ENCODE measurements at regions of chr21 and their contacts with region 1.

Region 1: DNA sequence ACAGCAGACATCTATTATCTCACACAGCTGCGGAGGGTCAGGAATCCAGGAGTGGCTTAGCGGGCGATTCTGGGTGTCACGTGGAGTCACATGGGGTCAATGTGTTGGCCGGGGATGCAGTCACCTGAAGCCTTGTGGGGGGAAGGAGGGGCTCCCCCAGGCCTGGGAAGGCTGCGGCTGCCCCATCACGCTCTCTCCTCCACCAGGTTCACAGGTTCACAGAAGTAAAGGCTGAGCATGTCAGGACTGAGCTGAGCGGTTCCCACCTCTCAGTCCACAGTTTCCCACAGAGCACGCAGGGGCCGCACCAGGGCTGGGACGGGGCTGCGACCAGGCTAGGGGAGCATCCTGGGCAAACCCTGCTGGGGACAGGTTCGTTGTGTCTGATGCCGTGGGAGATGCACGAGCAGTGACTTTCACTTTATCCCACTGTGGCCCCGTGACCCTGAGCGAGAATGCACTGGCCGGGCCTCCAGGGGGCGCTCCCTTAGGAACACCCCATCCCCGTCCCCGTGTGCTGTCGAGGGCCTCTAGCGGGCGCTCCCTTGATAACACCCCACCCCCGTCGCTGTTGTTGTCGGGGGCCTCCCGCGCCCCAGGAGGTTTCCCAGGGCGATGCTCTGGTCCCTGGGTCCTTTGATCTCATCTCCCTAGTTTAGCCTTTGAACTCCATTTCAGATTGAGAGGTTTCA is 73.2 kb upstream of the TRAPPC10 start:
- DNase-seq: peak; percentile 94
- ATAC-seq: peak; percentile 93
- H3K4me3 Mint-ChIP-seq: peak overlapping the region; percentile 39
- H3K27ac Mint-ChIP-seq: peak overlapping the region; percentile 19; the same call in 1 of the 2 replicates
- H3K4me1 Mint-ChIP-seq: peaks cover 3% of the 10 kb centered on the region
- H3K27me3 Mint-ChIP-seq: no peaks in the 10 kb centered on the region
- CTCF ChIP-seq: peak; percentile 92

Region 2: GRCh38 chr21:43810505-43811261 is 128.2 kb before region 1 on chr21:
- CTCF ChIA-PET with region 1: interaction called, 40 read pairs
- POLR2A ChIA-PET with region 1: interaction called, 4 read pairs
- DNase-seq: peak; percentile 98
- ATAC-seq: peak; percentile 77
- H3K4me3 Mint-ChIP-seq: no peak overlapping the region
- H3K27ac Mint-ChIP-seq: no peak overlapping the region
- H3K4me1 Mint-ChIP-seq: peaks cover 22% of the 10 kb centered on the region
- H3K27me3 Mint-ChIP-seq: no peaks in the 10 kb centered on the region
- CTCF ChIP-seq: peak; percentile 97

Region 3: DNA sequence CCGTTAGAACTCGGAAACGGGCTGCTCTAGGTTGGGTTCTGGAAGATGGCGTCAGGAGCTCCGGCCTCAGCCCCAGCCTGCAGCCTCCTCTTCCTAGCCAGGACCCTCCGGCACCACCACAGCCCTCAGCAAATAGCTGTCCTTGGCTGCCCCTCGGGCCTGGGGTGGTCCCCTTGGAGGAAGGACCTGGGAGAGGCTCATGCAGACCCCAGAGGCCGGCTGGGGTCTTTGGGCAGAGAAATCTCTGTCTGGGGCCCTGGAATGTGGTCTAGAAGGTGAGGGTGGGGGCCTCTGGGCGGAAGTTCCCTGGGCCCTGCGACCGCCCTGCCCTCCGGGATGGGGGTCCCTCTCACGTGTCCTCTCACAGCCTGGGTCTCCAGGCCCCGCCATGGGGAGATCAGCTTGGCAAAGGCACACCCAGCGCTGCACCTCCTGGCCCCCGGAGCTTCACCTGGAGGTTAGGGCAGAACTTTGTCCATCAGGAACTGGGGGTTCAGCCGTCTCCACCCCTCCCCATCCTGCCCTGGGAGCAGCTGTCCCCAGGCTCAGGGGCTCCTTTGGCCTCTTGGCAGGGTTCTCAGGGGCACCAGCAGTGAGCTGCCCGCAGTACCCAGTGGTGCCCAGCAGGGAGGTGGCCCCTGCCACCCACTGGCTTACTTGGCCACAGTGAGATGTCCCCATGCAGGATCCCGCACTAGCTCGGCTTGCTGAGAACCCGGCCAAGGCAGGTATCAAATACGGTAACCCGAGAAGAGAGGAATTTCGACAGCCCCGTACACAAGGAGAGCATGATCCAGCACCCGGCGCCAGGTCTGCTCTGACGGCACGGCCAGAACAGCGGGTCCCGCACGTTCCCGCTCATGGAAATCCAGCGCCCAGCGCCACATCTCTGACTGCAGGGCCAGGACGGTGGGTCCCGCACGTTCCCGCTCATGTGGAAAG is 112.9 kb before region 1 on chr21:
- CTCF ChIA-PET with region 1: interaction called, 11 read pairs
- POLR2A ChIA-PET with region 1: no interaction called
- DNase-seq: peak; percentile 54
- ATAC-seq: peak; percentile 73
- H3K4me3 Mint-ChIP-seq: no peak overlapping the region
- H3K27ac Mint-ChIP-seq: peak overlapping the region; percentile 78
- H3K4me1 Mint-ChIP-seq: peaks cover 7% of the 10 kb centered on the region
- H3K27me3 Mint-ChIP-seq: no peaks in the 10 kb centered on the region
- CTCF ChIP-seq: no peak

Region 4: GRCh38 chr21:43880111-43880985 is 58.5 kb before region 1 on chr21:
- CTCF ChIA-PET with region 1: interaction called, 12 read pairs
- POLR2A ChIA-PET with region 1: no interaction called
- DNase-seq: no peak
- ATAC-seq: no peak; the same call in 1 of the 2 replicates
- H3K4me3 Mint-ChIP-seq: no peak overlapping the region
- H3K27ac Mint-ChIP-seq: no peak overlapping the region
- H3K4me1 Mint-ChIP-seq: peaks cover 7% of the 10 kb centered on the region
- H3K27me3 Mint-ChIP-seq: no peaks in the 10 kb centered on the region
- CTCF ChIP-seq: no peak

Region 5: GRCh38 chr21:43956019-43956669 is 17.2 kb after region 1 on chr21:
- CTCF ChIA-PET with region 1: interaction called, 14 read pairs
- POLR2A ChIA-PET with region 1: no interaction called
- DNase-seq: no peak
- ATAC-seq: no peak
- H3K4me3 Mint-ChIP-seq: no peak overlapping the region
- H3K27ac Mint-ChIP-seq: peak overlapping the region; percentile 95; the same call in 1 of the 2 replicates
- H3K4me1 Mint-ChIP-seq: no peaks in the 10 kb centered on the region
- H3K27me3 Mint-ChIP-seq: no peaks in the 10 kb centered on the region
- CTCF ChIP-seq: no peak

Measured in WTC11 (cell line).